ENCODE measurements at regions of chr9 and their contacts with region 1.

Region 1: GRCh38 chr9:36551129-36551528 is 21.6 kb upstream of the MELK start:
- DNase-seq: no peak
- H3K4me3 ChIP-seq: no peak overlapping the region
- H3K27ac ChIP-seq: no peak overlapping the region
- H3K4me1 ChIP-seq: no peaks in the 10 kb centered on the region
- CTCF ChIP-seq: no peak

Region 2: GRCh38 chr9:36450110-36450732 is 100.9 kb before region 1 on chr9:
- CTCF ChIA-PET with region 1: no interaction called
- POLR2A ChIA-PET with region 1: no interaction called
- intact Hi-C with region 1: loop called (anchors 1 kb)
- DNase-seq: peak; percentile 61
- H3K4me3 ChIP-seq: no peak overlapping the region
- H3K27ac ChIP-seq: no peak overlapping the region
- H3K4me1 ChIP-seq: no peaks in the 10 kb centered on the region
- CTCF ChIP-seq: peak; percentile 93

Region 3: GRCh38 chr9:36517131-36517530 is 34.0 kb before region 1 on chr9:
- CTCF ChIA-PET with region 1: no interaction called
- POLR2A ChIA-PET with region 1: no interaction called
- intact Hi-C with region 1: loop called (anchors 5 kb)
- DNase-seq: no peak
- H3K4me3 ChIP-seq: no peak overlapping the region
- H3K27ac ChIP-seq: no peak overlapping the region
- H3K4me1 ChIP-seq: no peaks in the 10 kb centered on the region
- CTCF ChIP-seq: no peak